Dendritic cell treated with granulocyte-macrophage colony-stimulating factor and Interleukin-4, amounts not matched to agents 40 ng/mL and 50 ng/mL, for 4 days (primary cell): ENCODE measurements at regions of chr2 and their contacts with region 1.

Region 1: GRCh38 chr2:31688282-31688681 is 107.5 kb upstream of the SRD5A2 start:
- H3K4me3 Mint-ChIP-seq: no peak overlapping the region
- H3K27ac Mint-ChIP-seq: no peak overlapping the region
- H3K4me1 Mint-ChIP-seq: no peaks in the 10 kb centered on the region
- H3K27me3 Mint-ChIP-seq: no peaks in the 10 kb centered on the region

Region 2: DNA sequence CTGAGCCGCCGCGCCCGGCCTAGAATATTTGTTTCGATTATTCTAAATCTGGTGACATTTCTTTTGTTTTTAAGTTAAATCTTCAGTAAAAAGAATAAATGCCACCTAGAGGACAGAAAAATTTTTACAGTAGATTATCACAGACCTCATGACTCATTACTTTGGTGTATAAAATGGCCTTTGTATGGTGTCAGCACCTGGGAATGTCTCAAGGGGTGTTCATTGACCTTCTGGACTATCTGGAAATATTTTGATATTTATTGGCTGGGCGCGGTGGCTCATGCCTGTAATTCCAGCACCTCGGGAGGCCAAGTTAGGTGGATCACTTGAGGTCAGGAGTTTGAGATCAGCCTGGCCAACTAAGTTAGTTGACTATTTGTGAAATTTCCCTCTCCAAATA is 447.1 kb after region 1 on chr2:
- intact Hi-C with region 1: loop called (anchors 10 kb)
- H3K4me3 Mint-ChIP-seq: no peak overlapping the region
- H3K27ac Mint-ChIP-seq: no peak overlapping the region
- H3K4me1 Mint-ChIP-seq: peaks cover 17% of the 10 kb centered on the region
- H3K27me3 Mint-ChIP-seq: no peaks in the 10 kb centered on the region